ENCODE measurements at regions of chr3 and their contacts with region 1.

Region 1: DNA sequence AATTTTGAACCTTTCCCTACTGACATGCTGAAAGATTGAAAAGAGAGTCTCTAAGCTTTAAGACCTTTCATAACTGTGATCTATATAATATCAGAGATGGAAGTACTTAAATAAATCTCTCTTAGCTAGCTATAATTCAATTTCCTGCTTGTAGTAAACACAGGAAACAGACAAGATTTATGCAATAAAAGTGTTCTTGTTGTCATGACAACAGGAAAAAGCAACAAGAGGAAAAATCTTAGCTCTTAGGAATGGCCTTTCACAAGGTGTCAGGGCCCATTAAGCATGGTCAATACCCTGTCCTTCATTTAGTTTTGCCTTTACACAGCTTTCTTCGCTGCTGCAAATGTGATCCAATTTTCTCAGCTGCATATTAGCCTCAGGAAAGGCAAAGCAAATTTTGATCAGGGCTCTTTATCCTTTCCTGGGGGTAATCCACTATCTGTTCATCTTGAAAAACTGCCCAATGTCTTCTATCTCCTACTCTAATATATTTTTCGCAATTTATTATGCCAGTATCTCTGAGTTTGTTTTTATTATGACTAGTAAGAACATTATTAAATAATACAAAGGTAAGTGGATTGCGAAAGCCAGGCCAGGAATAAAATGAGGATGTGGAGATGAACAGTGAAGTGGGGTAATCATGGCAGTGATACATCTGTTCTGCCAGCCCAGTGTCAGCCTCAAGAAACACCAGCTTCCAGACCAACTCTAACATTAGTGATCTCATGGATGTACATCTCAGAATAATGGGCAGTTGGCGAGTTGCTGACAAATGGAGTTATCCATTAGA is 28.7 kb downstream of the SIDT1 start:
- DNase-seq: peak; percentile 94
- H3K4me3 ChIP-seq: no peak overlapping the region
- H3K27ac ChIP-seq: no peak overlapping the region
- H3K4me1 ChIP-seq: peaks cover 27% of the 10 kb centered on the region
- H3K27me3 ChIP-seq: no peaks in the 10 kb centered on the region
- CTCF ChIP-seq: no peak

Region 2: DNA sequence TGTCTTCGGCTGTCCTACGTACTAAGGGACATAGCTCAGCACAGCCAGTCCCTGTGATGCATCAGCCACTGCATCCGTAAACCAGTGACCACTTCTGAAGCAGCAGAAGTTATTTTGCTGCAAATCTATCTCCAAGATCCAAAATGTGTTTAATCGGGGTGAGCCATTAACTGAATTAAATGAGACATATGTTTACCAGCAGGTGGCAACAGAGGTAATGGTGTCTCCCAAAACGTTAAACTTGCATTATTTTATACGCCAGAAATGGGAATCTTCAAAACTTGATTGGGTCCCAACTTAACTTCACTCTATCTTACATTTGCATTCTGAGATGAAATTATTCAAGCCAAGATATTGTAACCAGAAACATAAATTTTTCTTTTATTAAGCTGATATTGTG is 425.0 kb before region 1 on chr3:
- CTCF ChIA-PET with region 1: no interaction called
- POLR2A ChIA-PET with region 1: no interaction called
- intact Hi-C with region 1: loop called (anchors 10 kb)
- DNase-seq: peak; percentile 51
- H3K4me3 ChIP-seq: no peak overlapping the region
- H3K27ac ChIP-seq: no peak overlapping the region
- H3K4me1 ChIP-seq: no peaks in the 10 kb centered on the region
- H3K27me3 ChIP-seq: no peaks in the 10 kb centered on the region
- CTCF ChIP-seq: peak; percentile 66

Region 3: GRCh38 chr3:113485161-113485609 is 75.8 kb before region 1 on chr3:
- CTCF ChIA-PET with region 1: no interaction called
- POLR2A ChIA-PET with region 1: no interaction called
- intact Hi-C with region 1: no loop called
- DNase-seq: no peak
- H3K4me3 ChIP-seq: no peak overlapping the region
- H3K27ac ChIP-seq: no peak overlapping the region
- H3K4me1 ChIP-seq: no peaks in the 10 kb centered on the region
- H3K27me3 ChIP-seq: no peaks in the 10 kb centered on the region
- CTCF ChIP-seq: no peak

Measured in A673 (cell line).